ENCODE measurements at regions of chr4 and their contacts with region 1.

Region 1: DNA sequence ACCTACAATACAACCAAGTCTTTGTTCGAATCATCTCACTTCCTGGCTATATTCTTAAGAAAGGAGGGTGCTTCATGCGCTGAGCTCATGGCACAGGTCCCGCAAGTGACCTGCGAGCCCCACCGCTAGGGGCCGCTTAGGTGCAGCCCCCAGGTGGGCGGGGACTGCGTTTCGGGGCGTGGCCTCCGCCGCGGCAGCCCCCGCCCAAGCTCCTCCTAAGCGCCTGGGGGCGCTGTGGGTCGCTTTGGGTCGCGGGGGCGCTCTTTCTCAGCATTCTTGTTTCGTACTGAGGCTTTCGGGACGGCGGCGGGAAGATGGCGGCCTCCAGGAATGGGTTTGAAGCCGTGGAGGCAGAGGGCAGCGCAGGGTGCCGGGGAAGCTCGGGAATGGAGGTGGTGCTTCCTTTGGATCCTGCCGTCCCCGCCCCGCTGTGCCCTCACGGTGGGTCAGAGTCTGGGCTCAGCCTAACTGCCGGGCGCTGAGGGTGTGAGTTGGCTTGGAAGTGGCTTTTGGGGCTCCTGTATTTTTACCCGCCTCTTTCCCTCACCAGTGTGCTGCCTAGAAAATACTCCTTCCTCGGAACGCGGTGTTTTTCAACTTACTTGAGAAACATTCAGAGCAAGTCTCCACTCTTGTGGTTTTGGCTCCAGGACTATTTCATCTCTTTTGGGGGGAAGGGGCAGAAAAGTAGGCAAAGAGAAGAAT is at the start of gene ZCCHC4:
- DNase-seq: peak; percentile 87
- H3K4me3 Mint-ChIP-seq: peak within 1 kb of the TSS; percentile 99
- H3K27ac Mint-ChIP-seq: peak within 1 kb of the TSS; percentile 92
- H3K4me1 Mint-ChIP-seq: peaks cover 34% of the 10 kb centered on the region
- H3K27me3 Mint-ChIP-seq: no peaks in the 10 kb centered on the region
- total RNA-seq, gene ZCCHC4: 13.5 and 15.3 TPM in 2 replicates

Region 2: GRCh38 chr4:24584175-24584850 is 728.3 kb before region 1 on chr4 and contains the start of gene DHX15:
- intact Hi-C with region 1: loop called (anchors 2 kb)
- DNase-seq: peak; percentile 90
- H3K4me3 Mint-ChIP-seq: peak within 1 kb of the TSS; percentile 100
- H3K27ac Mint-ChIP-seq: peak within 1 kb of the TSS; percentile 100
- H3K4me1 Mint-ChIP-seq: peaks cover 25% of the 10 kb centered on the region
- H3K27me3 Mint-ChIP-seq: peaks cover 2% of the 10 kb centered on the region
- total RNA-seq, gene DHX15: 246 and 260 TPM in 2 replicates

Region 3: DNA sequence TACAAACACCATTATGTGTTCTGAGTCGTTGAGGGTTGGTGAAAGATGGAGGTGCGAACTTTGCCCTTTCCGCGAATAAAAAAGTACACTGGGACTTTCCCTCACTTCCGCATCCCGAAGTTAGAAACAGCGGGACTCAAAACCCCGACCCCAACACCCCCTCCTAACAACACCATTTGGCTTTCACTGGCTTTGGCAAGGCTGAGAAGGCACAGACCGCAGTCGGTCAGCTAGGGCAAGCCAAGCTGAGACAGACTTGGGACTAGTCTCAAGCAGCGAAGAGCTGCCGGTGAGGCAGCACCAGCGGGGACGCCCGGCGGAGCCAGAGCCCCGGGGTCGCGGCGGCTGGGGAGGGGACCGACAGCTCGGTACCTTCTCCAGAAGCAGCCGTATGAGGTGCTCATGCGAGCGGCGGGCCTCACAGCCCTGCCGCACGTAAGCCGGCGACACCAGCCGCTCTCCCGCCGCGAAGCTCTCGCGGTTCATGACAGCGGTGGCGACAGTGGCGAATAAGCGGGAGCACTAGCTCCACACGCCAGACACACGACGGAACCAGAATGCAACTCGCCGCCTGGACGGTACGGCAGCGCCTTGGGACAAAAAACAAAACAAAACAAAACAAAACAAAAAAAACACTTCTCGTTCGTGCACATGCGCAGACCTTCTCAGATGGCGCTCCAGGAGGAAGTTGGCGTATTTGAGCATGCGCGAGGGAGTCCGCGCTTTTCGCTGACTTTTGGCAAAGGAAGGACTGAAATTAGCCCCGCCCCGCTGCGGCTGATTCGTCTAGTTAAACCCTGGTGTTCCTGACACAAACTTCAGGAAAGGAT is 152.5 kb before region 1 on chr4 and contains the start of gene SEPSECS:
- intact Hi-C with region 1: loop called (anchors 1 kb)
- DNase-seq: peak; percentile 93
- H3K4me3 Mint-ChIP-seq: peak within 1 kb of the TSS; percentile 91
- H3K27ac Mint-ChIP-seq: peak within 1 kb of the TSS; percentile 90
- H3K4me1 Mint-ChIP-seq: peaks cover 36% of the 10 kb centered on the region
- H3K27me3 Mint-ChIP-seq: peaks cover 3% of the 10 kb centered on the region
- total RNA-seq, gene SEPSECS: 13.4 and 15.3 TPM in 2 replicates

Region 4: GRCh38 chr4:25223802-25224375 is 88.8 kb before region 1 on chr4:
- intact Hi-C with region 1: no loop called
- DNase-seq: no peak
- H3K4me3 Mint-ChIP-seq: no peak overlapping the region
- H3K27ac Mint-ChIP-seq: no peak overlapping the region
- H3K4me1 Mint-ChIP-seq: no peaks in the 10 kb centered on the region
- H3K27me3 Mint-ChIP-seq: peaks cover 2% of the 10 kb centered on the region

Region 5: DNA sequence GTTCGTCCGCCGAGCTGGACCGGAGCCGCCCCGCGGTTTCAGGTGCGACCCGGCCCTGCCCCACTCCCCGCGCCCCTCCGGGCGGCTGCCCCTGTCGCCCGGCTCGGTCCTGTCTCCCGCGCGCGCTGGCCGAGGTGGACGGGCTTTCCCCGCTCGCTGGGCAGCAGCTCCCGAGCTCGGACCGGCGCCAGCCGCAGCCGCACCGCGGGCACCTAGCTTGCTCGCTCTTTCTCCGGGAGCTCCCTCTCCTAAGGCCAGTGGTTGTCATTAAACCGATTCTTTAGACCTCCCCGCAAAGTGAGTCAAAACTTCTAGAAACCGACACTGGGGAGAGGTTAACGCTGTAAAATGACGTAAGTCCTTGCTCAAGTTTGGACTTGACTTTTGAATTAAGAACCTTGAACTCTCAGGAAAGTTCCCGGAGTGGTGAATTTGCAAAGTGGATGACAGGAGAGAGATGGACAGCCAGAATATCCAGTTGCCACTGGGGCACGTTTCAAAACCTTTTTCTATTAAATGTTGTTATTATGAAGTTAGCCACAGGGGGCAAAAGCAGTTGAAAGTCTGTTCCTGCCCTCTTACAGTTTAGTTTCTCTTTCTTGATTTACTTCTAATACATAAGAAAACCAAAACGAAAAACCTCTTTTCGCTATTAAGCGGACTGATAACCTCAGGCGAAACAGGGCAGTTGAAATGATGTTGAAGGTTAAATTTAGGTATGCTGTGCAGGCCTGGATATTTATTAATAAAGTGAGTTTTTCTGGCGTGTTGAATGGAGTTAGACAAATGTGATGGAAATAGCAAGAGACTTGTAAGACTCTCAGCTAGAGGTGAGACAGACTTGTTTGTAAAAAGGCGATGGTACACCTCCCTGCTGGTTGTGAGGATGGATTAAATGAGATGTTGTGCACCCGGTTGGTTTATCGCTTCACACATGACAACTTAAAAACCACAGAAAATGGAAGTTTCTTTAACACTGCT is 78.0 kb before region 1 on chr4:
- intact Hi-C with region 1: loop called (anchors 1 kb)
- DNase-seq: peak; percentile 38
- H3K4me3 Mint-ChIP-seq: peak overlapping the region; percentile 92
- H3K27ac Mint-ChIP-seq: peak overlapping the region; percentile 98
- H3K4me1 Mint-ChIP-seq: peaks cover 37% of the 10 kb centered on the region
- H3K27me3 Mint-ChIP-seq: no peaks in the 10 kb centered on the region

Region 6: GRCh38 chr4:25367004-25367621 is 54.5 kb after region 1 on chr4:
- intact Hi-C with region 1: loop called (anchors 2 kb)
- DNase-seq: no peak
- H3K4me3 Mint-ChIP-seq: no peak overlapping the region
- H3K27ac Mint-ChIP-seq: no peak overlapping the region
- H3K4me1 Mint-ChIP-seq: no peaks in the 10 kb centered on the region
- H3K27me3 Mint-ChIP-seq: no peaks in the 10 kb centered on the region

Region 7: DNA sequence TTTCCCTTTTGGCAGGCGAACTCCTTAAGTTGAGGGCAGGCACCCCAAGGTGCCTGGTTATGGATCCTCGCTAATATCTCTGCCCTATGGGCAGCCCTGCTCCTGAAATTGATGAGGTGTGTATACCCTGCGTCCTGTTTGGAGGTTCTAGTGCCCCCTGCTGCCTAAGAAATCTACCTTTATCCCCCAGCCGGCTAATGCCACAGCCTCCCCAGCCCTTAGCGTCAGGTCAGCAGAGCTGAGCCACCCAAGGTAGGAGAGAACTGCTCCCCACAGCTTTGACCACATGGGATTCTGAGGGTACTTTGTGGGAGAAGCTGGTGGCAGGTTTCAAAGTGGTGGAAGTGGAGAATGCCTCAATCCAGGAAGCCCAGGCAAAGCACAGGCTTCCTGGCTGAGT is 115.2 kb after region 1 on chr4:
- intact Hi-C with region 1: no loop called
- DNase-seq: no peak
- H3K4me3 Mint-ChIP-seq: no peak overlapping the region
- H3K27ac Mint-ChIP-seq: no peak overlapping the region
- H3K4me1 Mint-ChIP-seq: no peaks in the 10 kb centered on the region
- H3K27me3 Mint-ChIP-seq: no peaks in the 10 kb centered on the region

Region 8: DNA sequence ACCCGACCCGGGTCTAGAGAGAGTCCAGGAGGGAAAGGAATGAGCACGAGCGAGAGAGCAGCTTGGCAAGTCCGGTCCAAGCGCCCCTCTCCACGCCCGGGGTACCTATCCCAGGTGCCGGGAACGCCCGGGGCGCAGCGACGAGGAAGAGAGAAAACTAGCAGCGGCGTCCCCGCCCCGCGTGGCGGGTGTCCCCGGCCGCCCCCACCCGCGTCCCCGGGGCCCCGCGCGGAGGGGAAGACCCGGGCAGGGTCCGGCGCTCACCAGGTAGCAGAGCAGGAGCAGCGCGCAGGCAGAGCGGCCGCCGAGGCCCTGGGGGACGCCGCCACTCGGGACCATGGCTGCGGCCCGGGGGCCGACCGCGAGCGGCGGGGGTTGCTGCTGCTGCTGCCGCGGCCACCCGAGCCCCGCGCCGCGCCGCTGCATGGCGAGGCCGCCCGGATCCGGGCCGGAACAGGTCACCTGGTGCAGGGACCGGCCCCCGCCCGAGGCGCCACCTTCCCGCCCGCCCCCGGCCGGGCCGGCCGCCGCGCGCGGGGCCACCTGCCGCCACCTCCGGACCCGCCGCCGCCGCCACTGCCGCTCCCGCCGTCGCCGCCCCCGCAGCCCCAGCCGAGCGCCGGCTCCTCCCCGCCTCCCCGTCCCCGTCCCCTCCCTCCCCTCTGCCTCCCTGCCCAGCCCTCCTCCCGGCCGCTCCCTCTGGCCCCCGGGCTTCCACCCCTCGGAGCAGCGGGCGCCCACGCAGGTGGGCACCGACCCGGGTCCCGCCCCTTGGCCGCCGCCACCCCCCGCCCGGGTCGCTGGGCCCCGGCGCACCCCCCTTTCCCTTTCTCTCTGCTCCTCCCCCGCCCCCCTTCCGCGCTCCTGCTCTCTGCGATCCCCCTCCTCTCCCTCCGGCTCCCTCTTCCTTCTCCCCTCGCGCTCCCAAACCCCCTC is 550.0 kb after region 1 on chr4 and contains the start of gene SEL1L3:
- intact Hi-C with region 1: loop called (anchors 5 kb)
- DNase-seq: peak; percentile 37
- H3K4me3 Mint-ChIP-seq: peak within 1 kb of the TSS; percentile 99
- H3K27ac Mint-ChIP-seq: peak within 1 kb of the TSS; percentile 99
- H3K4me1 Mint-ChIP-seq: peaks cover 42% of the 10 kb centered on the region
- H3K27me3 Mint-ChIP-seq: no peaks in the 10 kb centered on the region
- total RNA-seq, gene SEL1L3: 36.0 and 37.1 TPM in 2 replicates

Region 9: DNA sequence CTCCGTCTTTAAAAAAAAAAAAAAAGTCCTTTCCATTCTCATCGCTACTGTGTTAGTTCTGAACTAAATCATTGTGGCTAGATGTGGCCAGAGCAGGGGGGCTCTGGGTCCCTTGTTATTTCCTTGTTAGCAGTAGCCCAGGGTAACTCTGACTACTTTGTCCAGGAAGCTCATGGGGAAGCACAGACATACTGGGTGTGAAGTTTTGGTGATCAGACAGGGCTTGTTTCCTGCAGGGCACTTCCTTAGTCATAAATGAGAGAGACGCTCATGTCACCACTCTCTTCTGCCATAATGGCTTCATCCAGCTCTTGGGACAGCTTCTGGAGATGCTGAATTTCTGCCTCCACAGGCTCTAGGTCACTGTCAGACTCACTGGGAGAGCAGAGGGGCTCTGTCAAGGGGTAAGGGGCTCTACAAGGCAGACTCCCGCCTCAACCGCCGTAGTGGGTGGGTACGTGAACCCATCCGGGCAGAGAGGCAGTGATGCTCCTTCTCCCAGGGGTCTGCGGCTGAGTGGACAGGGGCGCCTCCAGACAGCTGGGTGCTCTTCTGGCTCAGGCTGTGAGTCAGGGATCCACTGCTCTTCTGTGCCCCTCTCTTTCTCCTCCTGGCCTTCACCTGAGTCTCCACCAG is 1560.9 kb after region 1 on chr4:
- intact Hi-C with region 1: loop called (anchors 10 kb)
- DNase-seq: peak; percentile 62
- H3K4me3 Mint-ChIP-seq: peak overlapping the region; percentile 61
- H3K27ac Mint-ChIP-seq: peak overlapping the region; percentile 86
- H3K4me1 Mint-ChIP-seq: peaks cover 77% of the 10 kb centered on the region
- H3K27me3 Mint-ChIP-seq: no peaks in the 10 kb centered on the region

Measured in activated T-helper 1 cell treated with anti-CD3 and anti-CD28 coated beads, Interleukin-12 subunit alpha, Interleukin-12 subunit beta, Interleukin-2, Interleukin-4 antibody, amounts not matched to agents 30 ng/mL and 10 ng/mL and 1 ng/mL, durations not matched to agents 14 hours and 24 hours and 36 hours (primary cell).